ENCODE measurements at regions of chr10 and their contacts with region 1.

Region 1: DNA sequence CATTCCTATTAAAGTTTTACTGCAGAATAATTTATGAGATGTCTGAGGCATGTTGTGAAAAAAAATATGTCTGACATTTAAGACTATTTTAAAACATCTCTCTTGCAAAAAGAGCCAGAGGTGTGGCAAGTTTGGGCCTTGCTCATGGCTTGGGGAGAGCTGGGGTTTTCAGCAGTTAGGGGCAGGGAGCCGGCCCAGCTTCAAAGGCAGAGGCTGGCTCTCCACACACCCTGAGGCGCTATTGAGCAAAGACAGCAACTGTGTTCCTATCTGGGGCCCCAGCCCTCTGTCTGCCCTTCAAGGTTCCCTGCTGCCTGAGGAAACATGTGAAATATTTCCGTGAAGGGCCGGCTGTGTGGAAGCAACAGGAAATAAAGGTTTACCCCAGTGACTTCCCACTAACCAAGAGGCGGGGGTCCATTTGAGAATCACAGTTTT is 94.0 kb downstream of the SORBS1 start:
- DNase-seq: peak; percentile 92 to 95
- H3K4me3 ChIP-seq: no peak overlapping the region
- H3K4me3 Mint-ChIP-seq: peak overlapping the region; percentile 18
- H3K27ac Mint-ChIP-seq: peak overlapping the region; percentile 46
- H3K4me1 ChIP-seq: peaks cover 46% of the 10 kb centered on the region
- H3K4me1 Mint-ChIP-seq: peaks cover 40% of the 10 kb centered on the region
- H3K27me3 ChIP-seq: no peaks in the 10 kb centered on the region
- H3K27me3 Mint-ChIP-seq: no peaks in the 10 kb centered on the region
- CTCF ChIP-seq: peak in 1 of 2 experiments; percentile 66

Region 2: DNA sequence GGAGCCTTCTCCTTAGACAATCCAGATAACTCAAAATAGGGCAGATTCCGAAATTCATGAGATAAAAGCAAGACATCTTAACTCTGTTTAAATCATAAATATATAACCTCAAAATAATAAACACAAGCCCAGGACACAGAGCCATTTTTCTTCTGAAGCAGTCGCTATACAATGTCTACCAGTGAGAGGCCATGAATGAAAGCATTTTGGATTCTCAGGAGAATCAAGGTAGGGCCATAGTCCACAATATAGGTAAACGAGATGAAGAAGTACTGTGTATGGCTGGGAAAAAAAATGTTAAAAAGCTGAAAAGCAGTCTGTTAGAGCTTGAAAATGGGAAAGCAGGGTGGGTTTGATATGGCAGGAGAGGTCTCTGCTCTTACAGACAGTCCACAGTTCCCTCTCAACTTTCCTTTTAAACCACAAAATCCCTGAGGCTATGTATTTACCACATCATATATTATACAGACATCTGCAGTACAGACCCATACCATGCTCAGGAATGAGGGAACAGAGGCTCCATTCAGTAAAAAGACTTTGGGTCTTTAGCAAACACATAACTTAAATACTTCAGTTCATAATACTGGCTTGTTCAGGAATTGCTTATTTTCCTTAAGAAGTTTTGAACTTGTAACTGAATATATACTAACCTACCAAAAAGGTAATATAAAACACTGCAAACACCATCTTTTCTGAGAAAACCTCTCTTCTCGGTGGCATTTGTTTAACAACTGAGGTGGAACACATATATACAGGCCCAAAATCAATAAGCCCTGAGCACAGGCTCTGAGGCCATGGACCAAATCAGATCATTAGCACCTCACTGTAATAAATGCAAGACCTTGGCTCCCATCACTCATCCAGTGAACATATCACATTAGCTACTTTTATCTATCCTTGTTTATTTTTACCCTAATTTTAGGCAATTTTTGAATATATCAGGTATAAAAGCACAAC is 15.3 kb before region 1 on chr10:
- CTCF ChIA-PET with region 1: interaction called, 4 read pairs
- POLR2A ChIA-PET with region 1: no interaction called
- intact Hi-C with region 1: loop called (anchors 2 kb)
- DNase-seq: no peak
- H3K4me3 ChIP-seq: no peak overlapping the region
- H3K4me3 Mint-ChIP-seq: no peak overlapping the region
- H3K27ac Mint-ChIP-seq: peak overlapping the region; percentile 7
- H3K4me1 ChIP-seq: peaks cover 17% of the 10 kb centered on the region
- H3K4me1 Mint-ChIP-seq: peaks cover 27% of the 10 kb centered on the region
- H3K27me3 ChIP-seq: no peaks in the 10 kb centered on the region
- H3K27me3 Mint-ChIP-seq: no peaks in the 10 kb centered on the region
- CTCF ChIP-seq: no peak

Region 3: GRCh38 chr10:95517536-95518454 is 50.6 kb after region 1 on chr10:
- CTCF ChIA-PET with region 1: no interaction called
- POLR2A ChIA-PET with region 1: no interaction called
- intact Hi-C with region 1: loop called (anchors 2 kb)
- DNase-seq: peak; percentile 49 to 66
- H3K4me3 ChIP-seq: no peak overlapping the region
- H3K4me3 Mint-ChIP-seq: no peak overlapping the region
- H3K27ac Mint-ChIP-seq: peak overlapping the region; percentile 75
- H3K4me1 ChIP-seq: peaks cover 31% of the 10 kb centered on the region
- H3K4me1 Mint-ChIP-seq: peaks cover 28% of the 10 kb centered on the region
- H3K27me3 ChIP-seq: no peaks in the 10 kb centered on the region
- H3K27me3 Mint-ChIP-seq: no peaks in the 10 kb centered on the region
- CTCF ChIP-seq: no peak

Region 4: DNA sequence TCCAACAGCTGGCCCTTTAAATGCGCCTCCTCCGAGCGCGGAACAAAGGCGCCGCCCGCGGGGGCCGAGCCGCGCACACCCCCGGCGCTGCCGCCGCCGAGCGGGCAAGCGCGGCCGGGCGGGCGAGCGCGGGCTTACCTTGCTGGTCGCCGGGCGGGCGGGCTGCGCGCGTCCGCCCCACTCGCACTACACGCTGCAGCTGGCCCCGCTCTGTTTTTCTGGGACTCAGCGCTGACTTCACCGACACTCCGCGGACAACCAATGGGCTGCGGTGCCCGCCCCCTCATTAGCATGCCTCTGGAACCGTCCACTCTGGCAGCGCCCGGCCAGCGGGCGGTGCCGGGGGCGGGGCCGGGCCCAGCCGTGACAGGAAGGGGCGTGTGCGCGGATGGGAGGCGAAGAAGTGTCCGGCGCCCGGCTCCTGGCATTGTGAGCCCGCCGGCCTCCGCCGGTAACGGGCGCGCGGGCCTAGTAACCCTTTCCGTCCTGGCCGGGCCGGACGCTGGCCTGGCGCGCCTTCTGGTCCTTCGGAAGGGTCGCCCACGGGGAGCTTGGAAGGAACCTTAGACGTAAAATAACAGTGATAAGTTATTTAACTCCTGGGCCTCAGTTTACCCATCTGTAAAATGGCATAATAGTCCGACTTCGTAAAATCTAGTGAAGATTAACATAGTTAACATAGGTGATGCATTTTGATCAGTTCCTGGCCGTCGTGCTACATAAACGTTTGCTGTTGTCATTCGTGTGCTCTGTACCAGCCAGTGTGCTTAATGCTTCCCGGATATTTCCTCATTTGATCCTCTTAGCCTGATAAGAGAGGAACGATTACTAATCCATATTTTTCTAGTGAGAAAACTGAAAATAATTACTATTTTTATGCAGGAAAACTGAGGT is 94.2 kb after region 1 on chr10 and contains the start of gene SORBS1:
- CTCF ChIA-PET with region 1: interaction called, 5 read pairs
- POLR2A ChIA-PET with region 1: no interaction called
- intact Hi-C with region 1: loop called (anchors 2 kb)
- DNase-seq: peak; percentile 98
- H3K4me3 ChIP-seq: peak within 1 kb of the TSS; percentile 89
- H3K4me3 Mint-ChIP-seq: peak within 1 kb of the TSS; percentile 99
- H3K27ac Mint-ChIP-seq: peak within 1 kb of the TSS; percentile 83
- H3K4me1 ChIP-seq: peaks cover 50% of the 10 kb centered on the region
- H3K4me1 Mint-ChIP-seq: peaks cover 59% of the 10 kb centered on the region
- H3K27me3 ChIP-seq: no peaks in the 10 kb centered on the region
- H3K27me3 Mint-ChIP-seq: no peaks in the 10 kb centered on the region
- CTCF ChIP-seq: no peak
- total RNA-seq, gene SORBS1: 39.3 and 44.1 TPM in 2 replicates